Left cardiac atrium (tissue), 4 donors: ENCODE measurements at regions of chr5 and their contacts with region 1.

Region 1: GRCh38 chr5:6745706-6746222 is 32.5 kb downstream of the TENT4A start:
- DNase-seq: no peak
- ATAC-seq: peak; percentile 62 to 67

Region 2: GRCh38 chr5:6377905-6378765 is 367.6 kb before region 1 on chr5 and contains the start of gene MED10:
- intact Hi-C with region 1: loop called in 1 of 2 experiments (anchors 10 kb)
- DNase-seq: peak; percentile 97
- ATAC-seq: peak; percentile 99 to 100
- total RNA-seq, gene MED10: 24.4 to 24.5 TPM

Region 3: DNA sequence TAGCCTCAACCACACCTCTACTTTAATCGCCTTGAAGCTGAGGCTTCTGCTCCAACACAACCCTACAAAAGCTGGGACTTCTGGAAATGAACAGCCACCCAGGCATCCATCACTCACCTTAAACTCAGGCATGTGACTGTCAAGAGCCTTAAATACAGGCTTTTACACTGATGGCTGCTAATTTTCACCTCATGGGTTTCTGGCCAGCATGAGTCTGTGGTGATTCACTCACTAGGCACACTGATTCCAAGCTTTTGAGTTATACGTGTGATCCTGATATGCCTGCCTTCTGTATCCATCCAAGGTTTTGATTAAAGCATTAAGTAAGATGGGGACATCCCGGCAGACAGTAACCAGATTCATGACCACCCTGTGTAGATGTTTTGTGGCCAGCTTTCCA is 121.8 kb before region 1 on chr5:
- intact Hi-C with region 1: loop called in 1 of 2 experiments (anchors 5 kb)
- DNase-seq: no peak
- ATAC-seq: no peak

Region 4: GRCh38 chr5:6632917-6633468 is 112.8 kb before region 1 on chr5 and contains the starts of genes NSUN2 and SRD5A1:
- intact Hi-C with region 1: loop called in 1 of 2 experiments (anchors 5 kb)
- DNase-seq: peak; percentile 91
- ATAC-seq: peak; percentile 98 to 99
- total RNA-seq, gene NSUN2: 23.2 to 29.3 TPM
- total RNA-seq, gene SRD5A1: 2.0 to 2.2 TPM